ENCODE measurements at regions of chr11 and their contacts with region 1.

Region 1: DNA sequence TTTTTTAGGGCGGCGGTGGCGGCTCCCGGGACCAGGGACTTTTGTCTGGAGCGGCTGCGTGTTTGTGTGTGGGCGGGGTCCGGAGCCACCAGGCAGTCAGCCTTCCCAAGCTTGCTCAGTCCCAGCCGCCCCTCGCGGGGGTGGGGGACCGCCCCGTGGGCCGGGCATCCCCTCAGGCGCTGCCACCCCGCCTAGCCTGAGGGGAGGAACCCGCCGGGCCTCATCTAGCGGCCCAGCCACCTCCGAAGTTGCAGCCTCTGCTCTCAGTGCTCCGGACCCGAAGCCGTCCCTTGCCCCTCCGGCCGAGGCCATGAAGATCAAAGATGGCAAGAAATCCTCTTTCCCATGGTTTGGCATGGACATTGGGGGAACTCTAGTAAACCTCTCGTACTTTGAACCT is 235.2 kb downstream of the OR4C45 start:
- DNase-seq: no peak
- H3K4me3 ChIP-seq: no peak overlapping the region
- H3K27ac ChIP-seq: no peak overlapping the region
- H3K4me1 ChIP-seq: no peaks in the 10 kb centered on the region
- H3K27me3 ChIP-seq: no peaks in the 10 kb centered on the region
- CTCF ChIP-seq: no peak
- EP300 ChIP-seq: no peak
- POLR2A ChIP-seq: no peak

Region 2: DNA sequence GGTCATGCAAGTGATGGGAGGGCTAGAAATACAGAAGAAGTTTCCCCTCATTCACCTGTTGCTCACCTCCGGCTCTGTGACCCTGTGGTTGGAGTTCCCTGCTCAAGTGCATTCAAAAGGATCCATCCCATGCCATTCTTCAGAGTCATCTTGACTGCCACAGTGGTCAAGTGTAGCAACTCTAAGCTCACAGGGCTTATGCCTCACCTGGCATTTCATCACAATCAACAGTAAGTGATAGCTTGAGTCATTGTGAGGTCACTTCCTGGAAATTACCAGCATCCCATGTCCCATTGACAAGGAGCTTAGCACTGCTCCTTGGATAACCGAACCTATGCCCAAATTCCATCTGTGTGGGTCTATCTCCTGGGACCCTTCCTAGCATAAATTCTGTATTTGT is 179.6 kb before region 1 on chr11:
- in situ Hi-C with region 1: no loop called
- intact Hi-C with region 1: loop called (anchors 5 kb)
- DNase-seq: no peak
- H3K4me3 ChIP-seq: no peak overlapping the region
- H3K27ac ChIP-seq: no peak overlapping the region
- H3K4me1 ChIP-seq: no peaks in the 10 kb centered on the region
- H3K27me3 ChIP-seq: no peaks in the 10 kb centered on the region
- CTCF ChIP-seq: no peak
- EP300 ChIP-seq: no peak
- POLR2A ChIP-seq: no peak

Measured in transverse colon (tissue), 4 donors.